WTC11 (cell line): ENCODE measurements at regions of chr19 and their contacts with region 1.

Region 1: DNA sequence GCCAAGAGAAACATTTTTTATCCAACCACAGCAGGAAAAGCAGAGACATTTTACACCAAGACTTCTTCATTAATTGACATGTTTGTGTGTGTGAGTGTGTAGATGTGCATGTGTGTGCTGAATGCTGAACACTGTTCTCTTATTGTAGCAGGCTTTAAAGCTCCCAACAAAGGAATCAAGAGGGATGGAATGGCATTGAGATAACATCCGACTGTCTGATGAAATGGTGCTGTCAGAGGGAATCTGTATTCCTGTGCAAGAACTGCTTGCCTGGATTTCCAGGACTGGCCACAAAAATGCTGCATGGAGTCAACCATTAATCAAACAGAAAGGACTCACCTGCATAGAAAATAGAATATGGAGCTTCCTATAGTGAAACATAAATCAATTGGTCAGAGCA is 354.0 kb downstream of the UQCRFS1 start:
- DNase-seq: no peak
- ATAC-seq: no peak
- H3K4me3 Mint-ChIP-seq: no peak overlapping the region
- H3K27ac Mint-ChIP-seq: no peak overlapping the region
- H3K4me1 Mint-ChIP-seq: no peaks in the 10 kb centered on the region
- H3K27me3 Mint-ChIP-seq: peaks cover 3% of the 10 kb centered on the region; the same call in 1 of the 2 replicates
- CTCF ChIP-seq: no peak

Region 2: GRCh38 chr19:28504139-28504538 is 354.8 kb before region 1 on chr19:
- CTCF ChIA-PET with region 1: no interaction called
- POLR2A ChIA-PET with region 1: no interaction called
- DNase-seq: no peak
- ATAC-seq: no peak
- H3K4me3 Mint-ChIP-seq: no peak overlapping the region
- H3K27ac Mint-ChIP-seq: no peak overlapping the region
- H3K4me1 Mint-ChIP-seq: peaks cover 49% of the 10 kb centered on the region
- H3K27me3 Mint-ChIP-seq: no peaks in the 10 kb centered on the region
- CTCF ChIP-seq: no peak

Region 3: DNA sequence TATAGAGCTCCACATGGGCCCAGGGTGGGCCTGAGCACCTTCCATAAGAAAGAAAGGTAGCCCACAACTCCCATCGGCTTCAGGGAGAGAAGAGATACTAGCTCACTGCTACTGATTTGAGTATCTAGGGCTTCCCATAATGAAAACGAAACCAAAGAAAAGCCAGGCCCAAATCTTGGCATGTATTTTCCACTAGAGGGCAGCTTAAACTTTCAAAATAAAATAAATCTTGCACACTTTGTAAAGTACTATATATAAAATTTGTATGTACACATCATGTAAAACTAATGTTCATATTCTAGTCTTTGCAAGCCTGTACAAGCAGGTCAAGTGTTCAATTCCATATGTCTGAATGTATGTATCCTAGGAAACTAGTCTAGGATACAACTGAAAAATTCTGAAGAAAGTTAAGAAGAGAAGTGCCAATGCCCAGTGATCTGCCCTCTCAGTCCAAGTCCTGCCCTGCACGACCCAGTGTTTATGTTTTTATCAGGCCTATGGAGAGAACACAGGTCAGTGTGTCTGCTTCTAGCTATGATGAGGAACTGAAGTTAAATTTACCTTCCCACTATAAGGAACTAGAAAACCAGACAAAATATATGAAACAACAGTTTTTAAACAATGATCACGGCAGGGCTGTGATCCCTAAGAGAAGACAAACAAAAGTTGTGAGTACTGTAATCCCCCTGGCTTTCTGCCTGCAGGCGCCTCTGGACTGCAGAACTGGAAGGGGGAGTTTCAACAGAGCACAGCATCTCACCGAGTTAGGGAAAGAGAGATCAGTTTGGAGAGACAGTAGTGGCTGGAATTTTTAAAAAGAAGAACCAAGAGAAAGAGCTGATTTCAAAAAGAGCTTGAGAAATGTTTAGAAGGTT is 121.7 kb before region 1 on chr19:
- CTCF ChIA-PET with region 1: interaction called, 25 read pairs
- POLR2A ChIA-PET with region 1: no interaction called
- DNase-seq: no peak
- ATAC-seq: peak; percentile 51
- H3K4me3 Mint-ChIP-seq: no peak overlapping the region
- H3K27ac Mint-ChIP-seq: peak overlapping the region; percentile 53
- H3K4me1 Mint-ChIP-seq: peaks cover 12% of the 10 kb centered on the region
- H3K27me3 Mint-ChIP-seq: peaks cover 3% of the 10 kb centered on the region; the same call in 1 of the 2 replicates
- CTCF ChIP-seq: peak; percentile 29; the same call in 1 of the 2 replicates

Region 4: DNA sequence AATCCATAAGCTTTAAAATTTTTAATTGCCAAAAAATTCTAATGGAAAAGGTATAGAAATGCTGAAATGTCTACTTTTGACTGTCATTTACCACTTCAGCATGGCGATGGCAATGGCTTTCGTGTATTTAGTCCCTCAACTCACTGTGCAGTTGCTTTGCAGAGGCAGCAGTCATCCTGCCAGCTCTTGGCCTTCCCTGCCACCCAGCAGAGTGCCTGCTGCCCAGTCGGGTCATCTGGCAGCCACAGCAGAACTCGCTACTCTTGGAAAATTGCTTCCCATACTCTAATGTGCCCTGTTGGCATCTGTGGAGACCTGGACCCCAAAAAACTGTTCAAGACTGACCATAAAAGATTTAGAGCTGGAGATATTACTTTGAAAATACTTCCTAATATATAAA is 29.2 kb before region 1 on chr19:
- CTCF ChIA-PET with region 1: no interaction called
- POLR2A ChIA-PET with region 1: no interaction called
- DNase-seq: no peak
- ATAC-seq: no peak
- H3K4me3 Mint-ChIP-seq: no peak overlapping the region
- H3K27ac Mint-ChIP-seq: no peak overlapping the region
- H3K4me1 Mint-ChIP-seq: peaks cover under 1% of the 10 kb centered on the region
- H3K27me3 Mint-ChIP-seq: no peaks in the 10 kb centered on the region; the same call in 1 of the 2 replicates
- CTCF ChIP-seq: no peak

Region 5: GRCh38 chr19:28934631-28935030 is 75.7 kb after region 1 on chr19:
- CTCF ChIA-PET with region 1: no interaction called
- POLR2A ChIA-PET with region 1: no interaction called
- DNase-seq: no peak
- ATAC-seq: no peak
- H3K4me3 Mint-ChIP-seq: no peak overlapping the region
- H3K27ac Mint-ChIP-seq: no peak overlapping the region
- H3K4me1 Mint-ChIP-seq: 0 out of 2 replicates have a peak, but pooled peaks cover 4% of the 10 kb centered on the region
- H3K27me3 Mint-ChIP-seq: peaks cover 3% of the 10 kb centered on the region
- CTCF ChIP-seq: no peak